CD4-positive, alpha-beta T cell (primary cell): ENCODE measurements at regions of chr5 and their contacts with region 1.

Region 1: DNA sequence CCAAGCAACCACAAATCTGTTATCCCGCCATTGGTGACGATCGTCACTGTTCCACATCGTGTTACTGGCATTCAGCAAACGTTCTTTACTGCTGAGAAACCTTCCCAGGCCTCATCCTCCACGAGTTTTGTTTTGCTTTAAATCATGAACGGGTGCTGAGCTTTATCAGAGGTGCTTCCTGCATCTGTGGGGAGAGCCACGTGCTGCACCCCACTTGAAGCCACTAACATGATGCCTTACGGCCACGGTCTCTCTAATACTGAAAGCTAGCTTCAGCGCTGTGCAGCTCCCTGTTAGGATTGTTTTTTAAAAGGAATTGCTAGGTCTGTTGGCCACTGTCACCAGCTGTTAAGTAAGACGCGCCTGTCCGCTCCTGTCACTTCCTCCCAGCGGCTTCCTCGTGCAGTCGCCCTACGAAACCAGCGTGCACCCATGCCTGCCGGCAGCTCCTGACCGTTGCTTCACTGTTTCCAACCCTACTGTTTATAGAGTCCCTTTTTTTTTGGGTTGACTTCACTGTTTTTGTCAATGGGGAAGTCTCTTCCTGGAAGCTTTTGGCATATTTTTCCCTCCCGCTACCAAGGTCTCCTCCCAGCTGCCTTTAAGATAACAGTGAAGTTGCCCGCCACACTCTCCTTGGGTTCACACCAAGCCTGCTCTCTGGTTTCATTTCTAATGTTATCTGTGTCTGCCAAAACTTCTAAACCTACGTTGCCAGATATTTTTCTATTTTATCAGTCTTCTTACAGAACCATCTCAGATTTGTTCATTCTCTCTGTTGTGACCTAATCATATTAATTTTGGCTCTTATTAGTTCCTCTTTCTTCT is 20.3 kb downstream of the LPCAT1 start:
- DNase-seq: peak in 4 of 14 experiments; percentile 28 to 63 (median 51)
- ATAC-seq: peak; percentile 24
- H3K4me3 ChIP-seq: no peak overlapping the region
- H3K4me3 Mint-ChIP-seq: peak overlapping the region; percentile 28
- H3K27ac ChIP-seq: no peak overlapping the region
- H3K27ac Mint-ChIP-seq: peak overlapping the region; percentile 18
- H3K4me1 ChIP-seq: peaks cover 42% of the 10 kb centered on the region
- H3K4me1 Mint-ChIP-seq: peaks cover 24% of the 10 kb centered on the region
- H3K27me3 ChIP-seq: no peaks in the 10 kb centered on the region
- H3K27me3 Mint-ChIP-seq: no peaks in the 10 kb centered on the region
- CTCF ChIP-seq: no peak

Region 2: GRCh38 chr5:1523771-1524480 is 20.5 kb after region 1 on chr5 and contains the start of gene LPCAT1:
- CTCF ChIA-PET with region 1: no interaction called
- POLR2A ChIA-PET with region 1: no interaction called
- intact Hi-C with region 1: no loop called
- DNase-seq: peak; percentile 38 to 89 (median 70)
- ATAC-seq: peak; percentile 90
- H3K4me3 ChIP-seq: peak within 1 kb of the TSS; percentile 56
- H3K4me3 Mint-ChIP-seq: peak within 1 kb of the TSS; percentile 90
- H3K27ac ChIP-seq: peak within 1 kb of the TSS; percentile 40 to 66
- H3K27ac Mint-ChIP-seq: peak within 1 kb of the TSS; percentile 79
- H3K4me1 ChIP-seq: peaks cover 37% of the 10 kb centered on the region
- H3K4me1 Mint-ChIP-seq: peaks cover 24% of the 10 kb centered on the region
- H3K27me3 ChIP-seq: no peaks in the 10 kb centered on the region
- H3K27me3 Mint-ChIP-seq: no peaks in the 10 kb centered on the region
- CTCF ChIP-seq: no peak
- total RNA-seq, gene LPCAT1: 20.4 to 21.2 TPM

Region 3: DNA sequence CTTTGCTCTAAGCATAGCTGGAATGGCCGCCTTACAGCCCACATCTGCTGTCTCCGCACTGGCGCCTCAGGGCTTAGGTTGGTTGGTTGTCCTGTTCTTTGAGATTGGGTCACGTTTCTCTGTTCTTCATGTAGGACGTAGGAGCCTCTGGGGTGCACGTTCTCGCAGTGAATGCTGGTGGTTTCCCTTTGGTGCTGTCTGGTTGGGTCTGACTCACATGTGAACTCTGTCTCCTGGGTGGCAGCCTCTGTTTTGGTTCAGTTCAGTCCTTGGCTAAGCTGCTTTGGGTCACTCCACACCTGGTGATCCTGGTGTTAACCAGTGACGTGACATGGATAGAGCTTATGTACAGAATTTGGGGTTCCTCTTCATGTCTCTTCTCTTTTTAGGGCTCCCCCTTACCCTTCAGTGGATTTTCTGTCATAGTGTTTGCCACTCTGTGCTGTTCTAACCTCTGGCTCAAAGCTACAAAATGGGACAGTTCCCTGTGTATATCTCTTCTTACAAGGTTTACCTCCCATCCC is 32.9 kb after region 1 on chr5:
- CTCF ChIA-PET with region 1: no interaction called
- POLR2A ChIA-PET with region 1: interaction called, 7 read pairs
- intact Hi-C with region 1: loop called in 1 of 2 experiments (anchors 2 kb)
- DNase-seq: peak; percentile 53 to 91 (median 65)
- ATAC-seq: peak; percentile 96
- H3K4me3 ChIP-seq: peak overlapping the region; percentile 39
- H3K4me3 Mint-ChIP-seq: peak overlapping the region; percentile 72
- H3K27ac ChIP-seq: peak overlapping the region; percentile 63 to 81
- H3K27ac Mint-ChIP-seq: peak overlapping the region; percentile 89
- H3K4me1 ChIP-seq: peaks cover 10% of the 10 kb centered on the region
- H3K4me1 Mint-ChIP-seq: peaks cover 23% of the 10 kb centered on the region
- H3K27me3 ChIP-seq: no peaks in the 10 kb centered on the region
- H3K27me3 Mint-ChIP-seq: no peaks in the 10 kb centered on the region
- CTCF ChIP-seq: no peak

Region 4: DNA sequence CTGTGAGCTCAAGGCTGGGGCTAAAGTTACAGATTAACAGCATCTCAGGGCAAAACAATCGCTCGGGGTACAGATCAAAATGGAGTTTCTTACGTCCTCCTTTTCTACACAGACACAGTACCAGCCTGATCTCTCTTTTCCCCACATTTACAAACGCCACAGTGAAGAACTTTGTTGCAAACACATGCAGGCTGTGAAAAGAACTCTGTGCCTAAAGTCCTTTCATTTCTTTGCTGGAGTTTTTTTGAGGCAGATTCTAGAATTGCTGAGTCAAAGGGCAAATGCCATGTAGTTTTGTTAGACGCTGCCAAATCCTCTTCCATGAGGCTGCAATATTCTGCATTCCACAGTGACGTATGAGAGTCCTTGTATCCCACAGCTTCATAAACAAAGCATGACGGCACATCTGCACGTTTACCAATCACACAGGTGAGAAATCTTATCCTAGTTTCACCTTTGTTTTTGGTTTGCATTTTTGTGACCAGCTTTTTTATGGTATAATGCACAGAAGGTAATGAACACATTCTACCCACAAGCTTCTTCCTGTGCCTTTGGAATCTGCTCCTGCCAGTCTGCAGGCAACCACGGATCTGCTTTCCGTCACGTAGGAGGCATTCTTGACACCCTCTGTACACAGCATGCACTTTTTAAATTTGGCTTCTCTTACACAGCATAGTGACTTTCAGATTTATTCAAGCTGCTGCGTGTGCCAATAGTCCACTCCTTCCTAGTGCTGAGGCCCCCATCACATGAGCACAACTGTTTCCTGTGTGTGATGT is 64.9 kb after region 1 on chr5:
- CTCF ChIA-PET with region 1: no interaction called
- POLR2A ChIA-PET with region 1: no interaction called
- intact Hi-C with region 1: no loop called
- DNase-seq: no peak
- ATAC-seq: no peak
- H3K4me3 ChIP-seq: no peak overlapping the region
- H3K4me3 Mint-ChIP-seq: no peak overlapping the region
- H3K27ac ChIP-seq: no peak overlapping the region
- H3K27ac Mint-ChIP-seq: no peak overlapping the region
- H3K4me1 ChIP-seq: no peaks in the 10 kb centered on the region
- H3K4me1 Mint-ChIP-seq: no peaks in the 10 kb centered on the region
- H3K27me3 ChIP-seq: no peaks in the 10 kb centered on the region
- H3K27me3 Mint-ChIP-seq: no peaks in the 10 kb centered on the region
- CTCF ChIP-seq: no peak